Transverse colon (tissue), 4 donors: ENCODE measurements at regions of chr9 and their contacts with region 1.

Region 1: GRCh38 chr9:26735160-26735559 is 157.4 kb downstream of the CAAP1 start:
- DNase-seq: no peak
- H3K4me3 ChIP-seq: no peak overlapping the region
- H3K27ac ChIP-seq: no peak overlapping the region
- H3K4me1 ChIP-seq: no peaks in the 10 kb centered on the region
- H3K27me3 ChIP-seq: no peaks in the 10 kb centered on the region
- CTCF ChIP-seq: no peak
- EP300 ChIP-seq: no peak
- POLR2A ChIP-seq: no peak

Region 2: GRCh38 chr9:26856413-26857032 is 121.4 kb after region 1 on chr9:
- in situ Hi-C with region 1: loop called in 1 of 4 experiments (anchors 10 kb)
- intact Hi-C with region 1: no loop called
- DNase-seq: peak; percentile 21
- H3K4me3 ChIP-seq: no peak overlapping the region
- H3K27ac ChIP-seq: no peak overlapping the region
- H3K4me1 ChIP-seq: no peaks in the 10 kb centered on the region
- H3K27me3 ChIP-seq: no peaks in the 10 kb centered on the region
- CTCF ChIP-seq: peak; percentile 39 to 55 (median 47)
- EP300 ChIP-seq: no peak
- POLR2A ChIP-seq: no peak

Region 3: DNA sequence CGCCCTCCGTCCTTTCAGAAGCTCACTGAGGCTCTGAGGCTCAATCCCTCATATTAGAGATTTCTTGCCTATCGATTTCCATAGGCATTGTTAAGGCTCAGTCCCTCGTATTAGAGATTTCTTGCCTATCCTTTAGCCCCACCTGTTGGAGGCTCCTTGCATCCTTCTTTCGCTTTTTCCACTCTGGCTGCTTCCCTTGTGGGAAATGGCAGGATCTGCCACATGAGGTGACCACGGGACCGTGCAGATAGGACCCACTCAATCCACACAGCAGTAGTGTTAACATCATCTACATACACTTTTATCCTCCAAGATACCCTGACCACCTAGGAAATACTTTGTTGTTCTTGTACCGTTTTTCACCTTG is 240.5 kb after region 1 on chr9:
- in situ Hi-C with region 1: loop called (anchors 10 to 25 kb)
- intact Hi-C with region 1: loop called (anchors 5 kb)
- DNase-seq: peak; percentile 56
- H3K4me3 ChIP-seq: no peak overlapping the region
- H3K27ac ChIP-seq: no peak overlapping the region
- H3K4me1 ChIP-seq: peaks cover 0 to 3% (median 0%) of the 10 kb centered on the region in 4 donors
- H3K27me3 ChIP-seq: no peaks in the 10 kb centered on the region
- CTCF ChIP-seq: peak; percentile 58 to 70 (median 60)
- EP300 ChIP-seq: no peak
- POLR2A ChIP-seq: no peak